ENCODE measurements at regions of chr7 and their contacts with region 1.

Region 1: GRCh38 chr7:107725151-107725740 is 18.7 kb upstream of the CBLL1 start:
- DNase-seq: no peak
- H3K4me3 ChIP-seq: no peak overlapping the region
- H3K27ac ChIP-seq: no peak overlapping the region
- H3K4me1 ChIP-seq: no peaks in the 10 kb centered on the region
- H3K27me3 ChIP-seq: no peaks in the 10 kb centered on the region
- CTCF ChIP-seq: peak in 2 of 3 experiments; percentile 41 to 53; a peak in 2 of 4 replicates
- EP300 ChIP-seq: no peak
- POLR2A ChIP-seq: no peak
- RAD21 ChIP-seq: peak; percentile 80

Region 2: DNA sequence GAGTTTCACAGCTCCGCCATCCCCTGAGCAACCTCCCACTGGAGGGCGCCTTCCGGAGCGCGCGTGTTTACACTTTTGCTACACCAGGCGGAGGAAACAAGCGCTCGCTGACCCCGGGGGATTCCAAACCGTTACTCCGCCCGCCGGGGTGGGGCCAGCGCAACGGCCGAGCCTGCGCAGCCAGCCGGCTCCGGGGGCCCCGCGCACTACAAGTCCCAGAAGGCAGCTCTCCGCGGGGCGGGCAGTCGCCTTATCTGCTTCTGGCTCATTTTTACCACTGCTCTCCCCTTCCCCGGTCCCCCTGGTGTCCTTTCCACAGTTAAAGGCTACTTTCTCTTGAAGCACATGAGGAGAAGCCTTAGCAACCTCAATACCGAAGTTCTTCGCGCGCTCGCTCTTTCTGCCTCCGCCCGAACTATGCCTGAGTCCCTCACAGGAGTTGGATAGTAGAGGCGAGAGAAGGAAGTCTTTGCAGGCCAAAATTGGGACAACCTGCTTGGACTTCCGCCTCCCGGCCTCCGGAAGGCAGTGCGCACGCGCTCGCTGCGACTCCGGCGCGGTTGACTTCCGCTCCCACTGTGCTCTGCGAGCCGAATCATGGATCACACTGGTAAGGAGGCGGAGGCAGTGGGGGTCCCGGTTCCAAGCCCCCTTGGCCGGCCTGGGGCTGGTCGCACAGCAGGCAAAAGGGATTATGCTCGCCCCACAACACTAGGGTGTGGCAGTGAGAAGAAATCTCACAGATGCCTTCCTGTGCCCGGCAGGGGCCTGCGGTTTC is 18.5 kb after region 1 on chr7 and contains the start of gene CBLL1:
- CTCF ChIA-PET with region 1: interaction called, 30 read pairs
- POLR2A ChIA-PET with region 1: interaction called, 5 read pairs
- DNase-seq: peak; percentile 78 to 94
- H3K4me3 ChIP-seq: peak within 1 kb of the TSS; percentile 88 to 100 (median 96)
- H3K27ac ChIP-seq: peak within 1 kb of the TSS; percentile 94
- H3K4me1 ChIP-seq: peaks cover 0 to 8% (median 2%) of the 10 kb centered on the region in 4 experiments; a peak in 3 of 7 replicates
- H3K27me3 ChIP-seq: no peaks in the 10 kb centered on the region
- CTCF ChIP-seq: peak; percentile 28 to 48 (median 41)
- EP300 ChIP-seq: no peak; a peak in 1 of 3 replicates
- POLR2A ChIP-seq: peak in 1 of 2 experiments; percentile 61; a peak in 1 of 3 replicates
- RAD21 ChIP-seq: peak; percentile 21 to 33
- total RNA-seq, gene CBLL1: 31.9 and 34.0 TPM in 2 replicates